ENCODE measurements at regions of chr14 and their contacts with region 1.

Region 1: GRCh38 chr14:100362311-100362927 is 39.3 kb downstream of the SLC25A47 start:
- DNase-seq: no peak
- H3K4me3 Mint-ChIP-seq: no peak overlapping the region
- H3K27ac Mint-ChIP-seq: no peak overlapping the region
- H3K4me1 Mint-ChIP-seq: peaks cover 60% of the 10 kb centered on the region
- H3K27me3 Mint-ChIP-seq: no peaks in the 10 kb centered on the region

Region 2: GRCh38 chr14:100341301-100342031 is 21.0 kb before region 1 on chr14:
- intact Hi-C with region 1: loop called (anchors 2 kb)
- DNase-seq: peak; percentile 12
- H3K4me3 Mint-ChIP-seq: peak overlapping the region; percentile 38
- H3K27ac Mint-ChIP-seq: peak overlapping the region; percentile 80
- H3K4me1 Mint-ChIP-seq: peaks cover 34% of the 10 kb centered on the region
- H3K27me3 Mint-ChIP-seq: no peaks in the 10 kb centered on the region

Region 3: GRCh38 chr14:102164241-102164641 is 1801.8 kb after region 1 on chr14:
- intact Hi-C with region 1: no loop called
- DNase-seq: no peak
- H3K4me3 Mint-ChIP-seq: no peak overlapping the region
- H3K27ac Mint-ChIP-seq: no peak overlapping the region
- H3K4me1 Mint-ChIP-seq: peaks cover 34% of the 10 kb centered on the region
- H3K27me3 Mint-ChIP-seq: no peaks in the 10 kb centered on the region

Measured in activated T-helper 1 cell treated with anti-CD3 and anti-CD28 coated beads, Interleukin-12 subunit alpha, Interleukin-12 subunit beta, Interleukin-2, Interleukin-4 antibody, amounts not matched to agents 30 ng/mL and 10 ng/mL and 1 ng/mL, durations not matched to agents 14 hours and 24 hours and 36 hours (primary cell).